Aorta (tissue), 5 donors: ENCODE measurements at regions of chr4 and their contacts with region 1.

Region 1: DNA sequence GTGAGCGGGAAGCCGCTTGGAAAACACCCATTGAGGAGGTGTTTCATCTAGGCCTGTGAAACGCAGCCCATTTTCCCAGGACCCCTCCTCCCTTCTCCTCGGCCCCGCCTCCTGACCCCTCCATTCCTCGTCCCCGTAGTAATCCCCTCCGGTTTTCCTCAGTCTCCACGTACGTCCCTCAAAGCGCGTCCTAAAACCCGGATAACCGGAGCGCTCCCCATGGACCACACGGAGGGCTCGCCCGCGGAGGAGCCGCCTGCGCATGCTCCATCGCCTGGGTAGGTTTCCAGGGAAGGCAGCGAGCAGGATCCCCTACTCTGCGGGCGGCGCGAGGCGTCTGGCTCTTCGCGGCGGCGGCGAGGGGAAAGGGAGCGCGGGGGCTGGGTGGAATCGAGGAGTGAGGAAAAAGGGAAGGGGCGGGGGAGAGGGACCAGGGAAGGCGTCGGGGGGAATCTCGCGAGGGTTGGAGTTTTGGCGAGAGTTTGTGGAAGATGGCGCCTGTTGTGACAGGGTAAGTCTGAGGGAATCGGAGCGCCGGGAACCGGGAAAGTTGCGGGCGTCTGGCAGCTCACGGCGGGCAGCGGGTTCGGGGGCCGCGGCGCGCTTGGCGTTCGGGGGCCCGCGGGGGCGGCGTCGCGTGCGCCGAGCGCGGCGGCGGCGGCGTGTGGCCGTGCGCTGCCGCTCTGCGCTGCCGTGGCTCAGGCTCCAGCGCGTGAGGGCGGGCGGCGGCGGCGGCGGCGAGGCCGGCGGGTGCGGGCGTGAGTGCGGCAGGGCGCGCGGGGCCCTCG is at the start of gene RBPJ:
- DNase-seq: peak; percentile 95 to 98
- ATAC-seq: peak; percentile 92
- H3K4me3 ChIP-seq: peak within 1 kb of the TSS; percentile 67 to 84
- H3K27ac ChIP-seq: peak within 1 kb of the TSS; percentile 51 to 88
- H3K4me1 ChIP-seq: peaks cover 0 to 2% of the 10 kb centered on the region in 2 donors
- H3K27me3 ChIP-seq: no peaks in the 10 kb centered on the region
- total RNA-seq, gene RBPJ: 83.7 to 162 TPM

Region 2: DNA sequence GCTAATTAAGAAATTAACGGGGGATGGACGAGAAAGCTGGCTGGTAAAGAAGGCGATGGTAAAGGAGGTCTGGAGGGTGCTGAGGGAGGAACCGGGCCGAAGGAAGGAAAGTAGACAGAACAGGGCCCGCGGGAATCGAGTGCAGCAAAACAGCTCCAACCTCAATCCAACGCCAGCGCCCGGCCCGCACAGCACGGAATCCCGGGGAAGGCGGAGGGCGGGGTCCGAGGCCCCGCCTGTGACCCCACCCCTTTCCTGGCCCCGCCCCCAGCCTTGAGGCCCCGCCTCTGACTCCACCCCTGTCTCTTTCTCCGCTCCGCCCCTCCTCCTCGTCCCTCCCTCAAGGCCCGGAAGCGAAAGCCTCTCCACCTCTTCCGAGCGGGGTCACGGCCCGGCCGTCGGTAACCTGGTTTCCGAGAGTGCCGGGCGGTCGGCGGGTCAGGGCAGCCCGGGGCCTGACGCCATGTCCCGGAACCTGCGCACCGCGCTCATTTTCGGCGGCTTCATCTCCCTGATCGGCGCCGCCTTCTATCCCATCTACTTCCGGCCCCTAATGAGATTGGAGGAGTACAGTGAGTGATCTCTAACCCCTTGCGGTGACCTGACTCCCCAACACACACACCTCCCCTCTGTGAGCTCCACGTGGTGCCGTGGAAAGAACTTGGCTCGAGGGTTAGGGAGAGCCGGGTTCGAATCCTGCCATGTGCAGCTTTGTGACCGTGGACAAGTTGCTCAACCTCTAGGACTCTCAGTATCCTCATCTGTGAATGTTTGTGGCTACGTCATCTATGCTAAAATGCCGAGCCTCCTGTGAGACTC is 406.7 kb before region 1 on chr4 and contains the start of gene SMIM20:
- intact Hi-C with region 1: loop called in 1 of 2 experiments (anchors 5 kb)
- DNase-seq: peak; percentile 94 to 96
- ATAC-seq: peak; percentile 99
- H3K4me3 ChIP-seq: peak within 1 kb of the TSS; percentile 50 to 53
- H3K27ac ChIP-seq: peak within 1 kb of the TSS; percentile 14 to 28
- H3K4me1 ChIP-seq: no peaks in the 10 kb centered on the region
- H3K27me3 ChIP-seq: no peaks in the 10 kb centered on the region
- total RNA-seq, gene SMIM20: 18.1 to 24.8 TPM

Region 3: DNA sequence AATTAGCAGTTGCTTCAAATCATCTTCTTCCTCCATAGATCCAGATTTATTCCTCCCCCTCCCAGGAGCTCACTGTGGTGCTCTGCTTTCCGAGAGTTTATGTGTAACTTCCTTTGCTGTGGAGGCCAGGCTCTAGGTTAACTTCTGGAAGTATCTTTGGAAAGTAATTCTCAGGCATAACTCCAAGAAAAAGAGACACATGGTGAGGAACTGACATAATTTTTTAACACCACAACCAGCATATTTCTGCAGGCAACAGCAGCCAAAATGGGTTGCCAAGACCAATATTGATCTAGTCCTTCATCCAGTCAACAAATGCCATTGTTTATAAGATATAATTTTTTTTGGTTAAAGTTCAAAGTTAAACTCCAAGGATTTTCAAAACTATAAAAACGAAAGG is 114.4 kb before region 1 on chr4:
- intact Hi-C with region 1: loop called in 1 of 2 experiments (anchors 10 kb)
- DNase-seq: no peak
- ATAC-seq: peak; percentile 90
- H3K4me3 ChIP-seq: no peak overlapping the region
- H3K27ac ChIP-seq: peak overlapping the region in 1 of 2 donors; percentile 12
- H3K4me1 ChIP-seq: peaks cover 0 to 4% of the 10 kb centered on the region in 2 donors
- H3K27me3 ChIP-seq: no peaks in the 10 kb centered on the region